Ascending aorta (tissue), 2 donors: ENCODE measurements at regions of chr3 and their contacts with region 1.

Region 1: DNA sequence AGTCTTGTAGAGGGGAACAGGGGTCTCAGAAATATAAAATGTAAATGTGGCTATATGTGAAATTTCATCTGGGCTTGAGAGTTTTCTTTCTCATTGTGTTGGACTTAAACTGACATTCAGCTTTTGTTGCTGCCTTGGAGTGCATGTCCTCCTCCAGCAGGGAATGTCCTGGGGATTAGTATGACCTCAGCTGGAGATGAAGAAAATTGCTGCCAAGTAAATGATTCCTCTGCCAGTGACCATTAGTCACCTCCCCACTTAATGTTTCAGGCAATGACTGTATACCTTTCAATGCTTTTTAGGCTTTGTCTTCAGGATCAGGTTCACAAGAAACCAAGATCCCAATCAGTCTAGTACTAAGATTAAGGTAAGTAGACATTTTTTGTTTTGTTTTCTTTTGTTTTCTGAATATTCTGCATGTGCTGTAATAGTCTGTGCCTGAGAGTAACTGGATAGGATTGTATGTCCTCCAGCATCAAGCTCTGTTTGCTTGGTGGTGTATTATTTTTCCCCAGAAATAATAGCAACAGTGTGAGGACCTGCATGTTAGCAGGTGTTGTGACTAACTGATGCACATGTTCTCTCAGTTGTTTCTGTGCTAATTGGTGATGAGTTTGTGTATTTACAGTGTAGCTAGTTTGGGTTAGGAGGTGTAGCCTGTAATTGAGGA is 18.1 kb upstream of the SLC22A13 start:
- DNase-seq: no peak
- H3K4me3 ChIP-seq: no peak overlapping the region
- H3K27ac ChIP-seq: no peak overlapping the region
- H3K4me1 ChIP-seq: no peaks in the 10 kb centered on the region
- H3K27me3 ChIP-seq: no peaks in the 10 kb centered on the region
- CTCF ChIP-seq: peak in 1 of 3 experiments; percentile 6

Region 2: GRCh38 chr3:38136777-38137614 is 110.5 kb before region 1 on chr3 and contains the start of gene ACAA1:
- intact Hi-C with region 1: loop called (anchors 2 kb)
- DNase-seq: peak; percentile 99 to 100
- H3K4me3 ChIP-seq: peak within 1 kb of the TSS; percentile 87 to 98
- H3K27ac ChIP-seq: peak within 1 kb of the TSS; percentile 90 to 97
- H3K4me1 ChIP-seq: peaks cover 0 to 28% of the 10 kb centered on the region in 2 donors
- H3K27me3 ChIP-seq: no peaks in the 10 kb centered on the region
- CTCF ChIP-seq: no peak
- total RNA-seq, gene ACAA1: 52.6 TPM

Region 3: DNA sequence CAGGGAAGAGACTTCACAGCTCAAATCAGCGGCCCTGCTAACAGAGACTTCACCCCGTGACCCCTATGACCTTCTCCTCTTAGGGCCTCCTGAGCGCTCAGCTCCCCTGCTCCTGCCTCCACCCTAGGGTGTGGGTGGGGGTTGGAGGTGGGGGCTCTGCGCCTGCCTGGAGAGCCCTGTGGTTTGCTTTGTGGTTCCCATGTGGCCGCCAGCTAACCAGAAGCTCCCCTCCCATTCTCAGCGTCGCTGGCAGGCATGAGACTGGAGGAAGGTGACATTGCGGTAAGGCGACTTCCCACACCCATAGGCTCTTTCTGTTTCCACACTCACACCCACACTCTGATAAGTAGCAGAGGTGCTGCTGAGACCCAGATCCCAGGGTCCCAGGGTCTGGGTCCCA is 126.7 kb after region 1 on chr3:
- intact Hi-C with region 1: no loop called
- DNase-seq: peak in 1 of 2 donors; percentile 46
- H3K4me3 ChIP-seq: no peak overlapping the region
- H3K27ac ChIP-seq: no peak overlapping the region
- H3K4me1 ChIP-seq: no peaks in the 10 kb centered on the region
- H3K27me3 ChIP-seq: no peaks in the 10 kb centered on the region
- CTCF ChIP-seq: no peak